Activated CD4-positive, alpha-beta T cell treated with anti-CD3 and anti-CD28 coated beads, Interleukin-2, amount 10 ng/mL, durations not matched to agents 24 days and 14 days (primary cell): ENCODE measurements at regions of chr7 and their contacts with region 1.

Region 1: DNA sequence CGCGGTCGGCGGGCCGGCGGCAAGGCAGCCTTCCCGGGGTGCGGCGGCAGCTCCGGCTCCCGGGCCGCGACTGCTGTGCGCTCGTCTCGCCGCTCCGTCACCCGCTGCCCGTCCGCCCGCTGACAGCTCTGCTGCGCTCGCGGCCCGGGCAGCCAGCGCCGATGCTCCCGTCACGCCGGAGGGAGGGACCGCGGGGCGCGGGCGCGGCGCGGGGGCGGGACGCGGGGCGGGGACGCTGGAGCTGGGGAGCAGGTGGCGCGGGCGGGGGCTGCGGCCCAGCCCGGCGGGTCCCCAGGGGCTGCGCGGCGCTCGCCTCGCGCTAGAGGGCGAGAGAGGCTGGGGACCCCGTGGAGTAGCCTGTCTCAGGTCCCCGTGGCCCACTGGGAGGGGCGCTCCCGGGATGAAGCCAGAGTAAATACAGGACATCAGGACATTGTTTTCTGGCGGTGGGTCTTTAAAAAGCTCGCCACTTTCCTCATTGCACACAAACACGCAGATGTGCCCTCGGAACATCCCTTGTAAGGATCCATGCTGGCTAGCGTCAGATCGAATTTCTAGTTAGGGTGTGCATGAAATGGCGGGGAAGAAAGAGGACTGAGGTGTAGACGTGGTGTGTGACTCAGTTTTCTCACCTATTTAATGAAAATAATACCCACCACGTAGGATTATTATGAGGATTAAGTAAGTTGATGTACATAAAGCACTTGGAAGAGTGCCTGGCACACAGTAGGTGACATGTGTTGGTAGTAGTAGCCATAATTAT is at the start of gene ELAPOR2:
- DNase-seq: peak; percentile 94
- H3K4me3 Mint-ChIP-seq: peak within 1 kb of the TSS; percentile 80
- H3K27ac Mint-ChIP-seq: peak within 1 kb of the TSS; percentile 43
- H3K4me1 Mint-ChIP-seq: peaks cover 14% of the 10 kb centered on the region
- H3K27me3 Mint-ChIP-seq: peaks cover 29% of the 10 kb centered on the region
- total RNA-seq, gene ELAPOR2: 1.9 and 2.1 TPM in 2 replicates

Region 2: GRCh38 chr7:87016606-87017005 is 43.1 kb before region 1 on chr7:
- intact Hi-C with region 1: no loop called
- DNase-seq: no peak
- H3K4me3 Mint-ChIP-seq: no peak overlapping the region
- H3K27ac Mint-ChIP-seq: no peak overlapping the region
- H3K4me1 Mint-ChIP-seq: no peaks in the 10 kb centered on the region
- H3K27me3 Mint-ChIP-seq: peaks cover 2% of the 10 kb centered on the region

Region 3: GRCh38 chr7:87075671-87076404 is 16.1 kb after region 1 on chr7:
- intact Hi-C with region 1: no loop called
- DNase-seq: no peak
- H3K4me3 Mint-ChIP-seq: no peak overlapping the region
- H3K27ac Mint-ChIP-seq: no peak overlapping the region
- H3K4me1 Mint-ChIP-seq: peaks cover 2% of the 10 kb centered on the region
- H3K27me3 Mint-ChIP-seq: peaks cover 13% of the 10 kb centered on the region

Region 4: DNA sequence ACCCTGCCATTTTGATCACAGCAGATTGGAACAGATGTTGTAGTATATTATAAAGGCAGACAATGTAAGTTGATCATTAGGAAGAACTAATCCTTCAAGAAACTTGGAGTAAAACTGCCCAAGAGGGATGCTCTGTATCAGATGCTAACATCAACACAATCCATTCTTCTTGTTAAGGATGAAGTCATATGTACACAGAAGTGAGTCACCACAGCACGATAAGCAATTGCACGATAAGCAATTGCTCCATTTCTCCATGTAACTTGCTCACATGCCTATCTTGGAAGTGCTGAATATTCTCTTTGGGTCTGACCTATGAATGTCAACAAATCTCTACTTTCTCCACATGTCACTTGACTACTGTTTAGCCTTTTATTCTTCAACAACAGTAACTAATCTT is 51.1 kb after region 1 on chr7:
- intact Hi-C with region 1: no loop called
- DNase-seq: no peak
- H3K4me3 Mint-ChIP-seq: no peak overlapping the region
- H3K27ac Mint-ChIP-seq: no peak overlapping the region
- H3K4me1 Mint-ChIP-seq: peaks cover 2% of the 10 kb centered on the region
- H3K27me3 Mint-ChIP-seq: peaks cover 6% of the 10 kb centered on the region

Region 5: GRCh38 chr7:87213811-87214210 is 154.1 kb after region 1 on chr7:
- intact Hi-C with region 1: loop called (anchors 1 kb)
- DNase-seq: no peak
- H3K4me3 Mint-ChIP-seq: peak overlapping the region; percentile 72
- H3K27ac Mint-ChIP-seq: peak overlapping the region; percentile 85
- H3K4me1 Mint-ChIP-seq: peaks cover 67% of the 10 kb centered on the region
- H3K27me3 Mint-ChIP-seq: no peaks in the 10 kb centered on the region

Region 6: GRCh38 chr7:87231256-87231655 is 171.6 kb after region 1 on chr7:
- intact Hi-C with region 1: loop called (anchors 5 kb)
- DNase-seq: no peak
- H3K4me3 Mint-ChIP-seq: no peak overlapping the region
- H3K27ac Mint-ChIP-seq: no peak overlapping the region
- H3K4me1 Mint-ChIP-seq: peaks cover 5% of the 10 kb centered on the region
- H3K27me3 Mint-ChIP-seq: peaks cover 8% of the 10 kb centered on the region